ENCODE measurements at regions of chr7 and their contacts with region 1.

Region 1: GRCh38 chr7:127162366-127162765 is 90.4 kb downstream of the GRM8 start:
- DNase-seq: no peak
- ATAC-seq: no peak
- H3K4me3 ChIP-seq: no peak overlapping the region
- H3K27ac ChIP-seq: no peak overlapping the region
- H3K4me1 ChIP-seq: no peaks in the 10 kb centered on the region
- H3K27me3 ChIP-seq: no peaks in the 10 kb centered on the region
- CTCF ChIP-seq: no peak

Region 2: DNA sequence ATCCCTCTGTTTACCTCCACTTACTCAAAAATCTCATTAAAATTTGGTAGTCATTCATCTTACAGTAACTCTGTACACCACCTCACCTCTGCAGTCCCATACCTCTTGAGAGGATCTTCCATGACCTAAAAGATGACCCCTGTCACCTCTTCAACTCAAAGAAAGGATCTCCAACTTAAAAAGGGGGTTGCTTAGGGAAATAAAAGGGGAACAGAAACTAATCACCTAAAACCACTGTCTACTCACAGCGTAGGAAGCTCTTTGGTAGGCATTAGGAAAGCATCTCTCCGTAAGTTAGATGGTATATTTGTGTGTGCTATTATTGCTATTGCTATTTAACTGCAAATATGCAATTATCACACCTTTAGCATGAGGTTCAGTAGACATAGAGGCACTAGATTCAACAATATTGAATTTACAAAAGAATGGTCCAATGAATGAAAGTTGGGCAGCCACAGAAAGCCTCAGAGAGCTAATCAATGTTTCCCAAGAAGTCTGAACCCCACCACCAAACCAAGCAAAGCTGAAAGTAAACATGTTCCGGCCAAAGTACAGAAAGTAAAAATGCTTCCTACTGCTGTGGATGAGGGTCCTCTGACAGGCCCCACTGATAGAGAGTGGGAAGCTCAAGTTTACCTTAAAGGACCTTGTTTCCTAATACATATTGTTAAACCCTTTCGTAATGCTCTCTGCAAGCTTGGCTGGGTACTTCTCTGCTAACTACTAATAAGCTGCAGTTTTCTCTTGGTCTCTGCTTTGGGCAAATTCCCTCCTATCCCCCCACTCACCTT is 15.4 kb before region 1 on chr7:
- CTCF ChIA-PET with region 1: interaction called, 12 read pairs
- POLR2A ChIA-PET with region 1: no interaction called
- intact Hi-C with region 1: no loop called
- DNase-seq: no peak
- ATAC-seq: no peak
- H3K4me3 ChIP-seq: no peak overlapping the region
- H3K27ac ChIP-seq: no peak overlapping the region
- H3K4me1 ChIP-seq: no peaks in the 10 kb centered on the region
- H3K27me3 ChIP-seq: no peaks in the 10 kb centered on the region
- CTCF ChIP-seq: no peak

Region 3: GRCh38 chr7:128201051-128201689 is 1038.8 kb after region 1 on chr7:
- CTCF ChIA-PET with region 1: no interaction called
- POLR2A ChIA-PET with region 1: no interaction called
- intact Hi-C with region 1: no loop called
- DNase-seq: no peak
- ATAC-seq: no peak
- H3K4me3 ChIP-seq: no peak overlapping the region
- H3K27ac ChIP-seq: no peak overlapping the region
- H3K4me1 ChIP-seq: no peaks in the 10 kb centered on the region
- H3K27me3 ChIP-seq: peaks cover 23% of the 10 kb centered on the region
- CTCF ChIP-seq: no peak

Measured in PC-3 (cell line).